Astrocyte of the cerebellum (primary cell): ENCODE measurements at regions of chr1 and their contacts with region 1.

Region 1: DNA sequence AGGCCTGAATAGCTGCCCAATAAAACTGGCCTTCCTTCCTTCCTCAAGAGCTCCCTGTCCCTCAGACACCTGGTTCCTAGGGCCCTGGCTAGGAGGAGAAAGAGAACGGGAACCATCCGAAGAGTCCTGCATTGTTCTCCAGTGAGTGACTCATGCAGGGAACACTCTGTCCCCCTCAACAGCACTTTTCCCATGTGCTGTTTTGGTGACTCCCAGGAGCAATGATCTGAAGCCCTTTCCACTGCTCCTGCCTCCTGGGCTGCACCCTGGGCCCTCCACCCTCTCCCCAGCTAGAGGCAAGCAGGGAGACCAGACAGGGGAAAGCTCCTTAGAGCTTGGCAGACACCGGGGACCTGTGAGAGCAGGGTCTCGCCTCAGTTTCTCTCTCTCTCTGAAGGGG is 18.9 kb downstream of the TNNT2 start:
- DNase-seq: no peak
- H3K4me3 ChIP-seq: no peak overlapping the region
- CTCF ChIP-seq: no peak

Region 2: GRCh38 chr1:200831091-200831490 is 527.5 kb before region 1 on chr1:
- in situ Hi-C with region 1: no loop called
- DNase-seq: no peak
- H3K4me3 ChIP-seq: no peak overlapping the region
- CTCF ChIP-seq: no peak

Region 3: GRCh38 chr1:201275041-201275676 is 83.4 kb before region 1 on chr1:
- in situ Hi-C with region 1: loop called (anchors 5 kb)
- DNase-seq: peak; percentile 36
- H3K4me3 ChIP-seq: no peak overlapping the region
- CTCF ChIP-seq: no peak